ENCODE measurements at regions of chr4 and their contacts with region 1.

Region 1: DNA sequence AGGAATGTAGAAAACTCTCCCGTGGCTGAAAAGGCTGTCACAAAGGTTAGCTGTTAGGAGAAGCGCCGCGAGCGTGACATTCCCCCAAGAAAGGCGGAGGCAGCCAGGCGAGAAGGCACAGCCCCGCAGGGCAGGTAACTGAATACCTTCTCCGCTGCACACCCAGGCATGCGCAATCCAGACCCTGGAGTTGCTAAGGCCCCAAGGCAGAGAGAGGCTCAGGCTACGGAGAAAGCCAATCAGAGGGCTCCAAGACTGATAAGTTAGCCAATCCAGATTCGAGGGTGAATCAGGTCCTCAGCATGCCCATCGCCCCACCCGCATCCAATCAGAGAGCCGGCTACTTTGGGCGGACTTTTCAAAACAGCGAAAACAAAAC is 485 bp upstream of the CCNG2 start:
- DNase-seq: peak; percentile 93 to 97
- H3K4me3 ChIP-seq: peak overlapping the region; percentile 61; the same call in 1 of the 2 replicates
- H3K27ac ChIP-seq: peak overlapping the region; percentile 76
- H3K4me1 ChIP-seq: peaks cover 50% of the 10 kb centered on the region
- H3K27me3 ChIP-seq: no peaks in the 10 kb centered on the region
- CTCF ChIP-seq: no peak

Region 2: DNA sequence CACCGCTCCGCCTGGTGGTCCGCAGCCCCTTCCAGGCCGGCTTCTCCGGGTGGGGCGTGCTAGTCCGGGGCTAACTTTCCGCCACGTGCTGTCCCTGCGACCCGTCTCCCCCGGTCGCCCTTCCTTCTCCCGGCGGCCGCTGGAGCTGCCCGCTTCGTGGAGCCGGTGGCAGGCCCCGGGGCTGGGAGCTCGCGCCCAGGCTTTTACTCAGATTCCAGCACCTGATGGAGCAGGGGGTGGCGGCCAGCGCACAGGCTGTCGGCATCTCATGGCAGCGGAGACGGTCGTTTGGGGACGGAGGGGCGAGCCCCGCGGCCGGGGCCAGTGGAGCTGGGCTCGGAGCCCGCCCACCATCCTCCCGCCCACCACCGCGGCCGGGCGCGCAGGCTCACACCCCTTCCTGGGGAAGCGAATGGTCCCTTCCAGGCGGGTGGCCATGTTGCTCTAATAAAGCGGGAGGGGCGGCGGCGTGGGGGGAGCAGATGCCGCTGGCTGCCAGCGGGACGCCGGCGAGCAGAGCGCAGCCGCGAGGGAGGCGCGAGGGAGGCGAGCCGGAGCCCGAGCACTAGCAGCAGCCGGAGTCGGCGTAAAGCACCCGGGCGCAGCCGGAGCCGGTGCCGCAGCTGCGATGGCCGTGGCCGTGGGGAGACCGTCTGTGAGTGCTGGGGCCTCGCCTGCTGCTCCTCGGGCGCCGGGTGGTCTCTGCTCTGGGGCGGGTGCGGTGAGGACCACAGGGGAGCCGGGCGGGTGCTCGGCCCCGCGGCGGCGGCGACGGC is 207.1 kb before region 1 on chr4 and contains the start of gene SEPTIN11:
- CTCF ChIA-PET with region 1: no interaction called
- POLR2A ChIA-PET with region 1: no interaction called
- intact Hi-C with region 1: loop called (anchors 5 kb)
- DNase-seq: peak; percentile 67 to 85
- H3K4me3 ChIP-seq: peak within 1 kb of the TSS; percentile 70
- H3K27ac ChIP-seq: peak within 1 kb of the TSS; percentile 51
- H3K4me1 ChIP-seq: peaks cover 14% of the 10 kb centered on the region; the same call in 1 of the 2 replicates
- H3K27me3 ChIP-seq: no peaks in the 10 kb centered on the region
- CTCF ChIP-seq: no peak
- total RNA-seq, gene SEPTIN11: 38.8 and 48.1 TPM in 2 replicates

Region 3: GRCh38 chr4:77095101-77095821 is 61.3 kb before region 1 on chr4:
- CTCF ChIA-PET with region 1: interaction called, 3 read pairs
- POLR2A ChIA-PET with region 1: no interaction called
- intact Hi-C with region 1: loop called (anchors 1 kb)
- DNase-seq: peak in 1 of 2 experiments; percentile 30
- H3K4me3 ChIP-seq: no peak overlapping the region
- H3K27ac ChIP-seq: no peak overlapping the region
- H3K4me1 ChIP-seq: no peaks in the 10 kb centered on the region
- H3K27me3 ChIP-seq: no peaks in the 10 kb centered on the region
- CTCF ChIP-seq: peak; percentile 68

Region 4: GRCh38 chr4:77104791-77105540 is 51.6 kb before region 1 on chr4:
- CTCF ChIA-PET with region 1: interaction called, 7 read pairs
- POLR2A ChIA-PET with region 1: interaction called, 27 read pairs
- intact Hi-C with region 1: loop called (anchors 2 kb)
- DNase-seq: peak; percentile 36 to 43
- H3K4me3 ChIP-seq: no peak overlapping the region
- H3K27ac ChIP-seq: no peak overlapping the region
- H3K4me1 ChIP-seq: no peaks in the 10 kb centered on the region
- H3K27me3 ChIP-seq: no peaks in the 10 kb centered on the region
- CTCF ChIP-seq: no peak

Region 5: GRCh38 chr4:78355306-78355705 is 1198.8 kb after region 1 on chr4:
- CTCF ChIA-PET with region 1: no interaction called
- POLR2A ChIA-PET with region 1: no interaction called
- intact Hi-C with region 1: no loop called
- DNase-seq: no peak
- H3K4me3 ChIP-seq: no peak overlapping the region
- H3K27ac ChIP-seq: no peak overlapping the region
- H3K4me1 ChIP-seq: no peaks in the 10 kb centered on the region
- H3K27me3 ChIP-seq: no peaks in the 10 kb centered on the region
- CTCF ChIP-seq: no peak